Activated CD8-positive, alpha-beta T cell treated with anti-CD3 and anti-CD28 coated beads, Interleukin-2, amount 10 ng/mL, durations not matched to agents 7 days and 5 days (primary cell): ENCODE measurements at regions of chr9 and their contacts with region 1.

Region 1: DNA sequence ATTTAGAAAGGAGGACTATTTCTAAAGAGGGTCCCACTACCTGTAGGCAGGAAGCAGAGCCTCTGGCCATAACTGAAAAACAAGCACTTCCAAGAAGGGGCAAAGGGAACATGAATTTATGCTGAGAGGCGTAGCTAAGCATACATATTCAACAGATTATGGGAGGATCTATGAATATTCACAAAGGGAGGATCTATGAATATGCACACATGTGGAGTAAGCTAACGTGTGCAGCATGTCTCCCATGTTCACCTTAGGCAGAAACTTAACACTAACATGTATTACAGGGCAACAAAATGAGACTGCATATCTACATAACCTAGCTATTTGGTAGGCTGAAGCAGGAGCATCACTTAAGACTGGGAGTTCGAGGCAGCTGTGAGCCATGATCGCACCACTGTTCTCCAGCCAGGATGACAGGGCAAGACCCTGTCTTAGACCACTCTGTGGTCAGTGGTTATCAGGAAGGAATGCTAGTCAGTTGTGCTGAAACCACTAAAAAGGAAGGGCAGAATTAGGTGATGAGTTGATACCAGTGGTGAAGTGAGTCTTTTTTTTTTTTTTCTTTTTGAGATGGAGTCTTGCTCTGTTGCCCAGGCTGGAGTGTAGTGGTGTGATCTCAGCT is 20.8 kb downstream of the FXN start:
- DNase-seq: no peak
- ATAC-seq: no peak
- H3K4me3 Mint-ChIP-seq: no peak overlapping the region
- H3K27ac Mint-ChIP-seq: no peak overlapping the region
- H3K4me1 Mint-ChIP-seq: peaks cover 29% of the 10 kb centered on the region
- H3K27me3 Mint-ChIP-seq: no peaks in the 10 kb centered on the region

Region 2: DNA sequence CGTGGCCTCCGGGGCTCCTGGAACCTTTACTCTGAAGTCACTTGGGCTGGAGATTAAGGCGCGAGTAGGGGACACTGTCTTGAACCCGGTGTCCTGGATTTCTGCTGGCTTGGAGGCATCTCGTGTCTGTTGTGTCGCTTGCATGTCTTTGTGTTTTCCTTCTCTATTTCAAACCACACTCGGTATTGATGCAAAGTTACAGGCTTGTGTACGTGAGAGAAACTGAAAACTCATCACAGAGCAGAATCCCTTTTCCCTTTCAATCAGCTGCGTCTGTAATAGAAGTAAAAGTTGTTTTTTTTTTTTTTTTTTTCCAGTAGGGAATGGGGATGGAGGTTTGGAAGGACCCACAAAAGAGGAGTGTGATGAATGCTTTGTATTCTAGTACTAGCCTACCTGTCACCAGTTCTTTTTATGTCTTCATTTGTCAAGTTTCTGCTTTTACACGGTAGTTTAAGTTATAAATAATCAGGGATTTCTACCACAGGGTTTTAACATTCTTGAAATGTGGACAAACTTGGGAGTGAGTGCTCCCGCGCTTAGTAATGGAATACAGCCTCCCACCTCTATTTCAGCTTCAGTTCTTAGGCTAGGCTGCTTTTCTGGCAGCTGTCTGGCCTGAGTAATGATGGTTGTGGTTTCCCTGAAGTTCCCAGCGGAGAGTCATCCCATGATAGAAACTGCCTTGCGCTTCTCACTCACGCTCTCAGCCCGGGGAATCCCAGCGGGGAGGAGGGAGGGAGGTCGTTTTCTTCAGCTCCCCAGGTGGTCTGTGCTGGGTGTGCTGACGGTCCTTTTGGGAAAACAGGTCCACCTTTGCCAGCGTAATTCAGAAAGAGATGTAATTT is 118.5 kb after region 1 on chr9:
- CTCF ChIA-PET with region 1: interaction called, 10 read pairs
- POLR2A ChIA-PET with region 1: no interaction called
- DNase-seq: peak; percentile 23
- ATAC-seq: peak; percentile 23
- H3K4me3 Mint-ChIP-seq: peak overlapping the region; percentile 66
- H3K27ac Mint-ChIP-seq: no peak overlapping the region
- H3K4me1 Mint-ChIP-seq: peaks cover 31% of the 10 kb centered on the region
- H3K27me3 Mint-ChIP-seq: peaks cover 55% of the 10 kb centered on the region